PC-3 (cell line): ENCODE measurements at regions of chr6 and their contacts with region 1.

Region 1: GRCh38 chr6:143575440-143575839 is 63.9 kb upstream of the FUCA2 start:
- DNase-seq: peak; percentile 76
- ATAC-seq: peak; percentile 62
- H3K4me3 ChIP-seq: no peak overlapping the region
- H3K27ac ChIP-seq: no peak overlapping the region
- H3K4me1 ChIP-seq: peaks cover 9% of the 10 kb centered on the region
- H3K27me3 ChIP-seq: no peaks in the 10 kb centered on the region
- CTCF ChIP-seq: peak; percentile 87

Region 2: DNA sequence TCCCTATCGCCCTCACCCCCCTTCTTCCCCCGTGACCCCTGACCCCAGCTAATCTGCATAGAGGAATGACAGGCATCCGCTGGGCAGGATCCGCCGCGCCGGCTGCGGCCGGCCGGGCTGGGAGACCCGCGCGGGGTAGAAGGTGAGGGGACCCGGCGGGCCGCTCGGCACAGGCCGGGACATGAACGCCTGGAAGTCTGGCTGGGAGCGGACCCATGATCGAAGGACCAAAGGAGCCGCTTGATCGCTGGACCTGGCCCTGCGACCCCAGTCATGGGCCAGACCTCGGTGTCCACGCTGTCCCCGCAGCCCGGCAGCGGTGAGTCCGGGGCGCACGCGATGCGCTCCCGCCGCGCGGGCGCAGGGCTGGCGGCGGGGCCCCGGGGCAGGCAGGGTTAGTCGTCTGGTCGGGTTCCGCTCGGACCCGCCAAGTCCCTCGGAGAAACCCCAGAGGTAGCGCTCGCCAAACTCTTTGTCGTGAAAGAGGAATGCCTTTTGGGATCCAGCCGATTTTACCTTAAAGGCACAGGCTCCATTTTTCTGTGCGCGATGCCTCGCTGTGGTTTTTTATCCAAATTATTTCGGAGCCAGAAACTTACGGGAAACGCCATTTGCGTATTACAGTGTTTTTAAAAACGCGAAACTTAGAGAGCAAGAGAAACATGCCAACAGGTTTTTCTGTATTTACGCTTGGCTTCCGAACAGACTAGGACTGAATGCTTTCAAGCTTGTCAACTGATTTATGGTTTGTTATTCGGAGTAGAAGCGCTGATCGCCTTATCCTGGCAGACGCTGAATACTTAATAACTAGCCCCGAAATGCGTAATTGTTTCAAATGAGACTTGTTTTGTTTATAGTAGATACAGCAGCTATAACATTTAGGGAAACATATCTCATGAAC is 102.7 kb after region 1 on chr6 and contains the start of gene PHACTR2:
- CTCF ChIA-PET with region 1: no interaction called
- POLR2A ChIA-PET with region 1: no interaction called
- intact Hi-C with region 1: loop called (anchors 5 kb)
- DNase-seq: peak; percentile 57
- ATAC-seq: peak; percentile 67
- H3K4me3 ChIP-seq: peak within 1 kb of the TSS; percentile 93
- H3K27ac ChIP-seq: peak within 1 kb of the TSS; percentile 35
- H3K4me1 ChIP-seq: peaks cover 60% of the 10 kb centered on the region
- H3K27me3 ChIP-seq: no peaks in the 10 kb centered on the region
- CTCF ChIP-seq: no peak
- total RNA-seq, gene PHACTR2: 19.4 and 25.1 TPM in 2 replicates

Region 3: GRCh38 chr6:143842902-143843676 is 267.6 kb after region 1 on chr6 and contains the start of gene LTV1:
- CTCF ChIA-PET with region 1: interaction called, 11 read pairs
- POLR2A ChIA-PET with region 1: no interaction called
- intact Hi-C with region 1: loop called (anchors 5 kb)
- DNase-seq: peak; percentile 92
- ATAC-seq: peak; percentile 98
- H3K4me3 ChIP-seq: peak within 1 kb of the TSS; percentile 85
- H3K27ac ChIP-seq: peak within 1 kb of the TSS; percentile 54
- H3K4me1 ChIP-seq: peaks cover 9% of the 10 kb centered on the region; the same call in 1 of the 2 replicates
- H3K27me3 ChIP-seq: no peaks in the 10 kb centered on the region
- CTCF ChIP-seq: no peak
- total RNA-seq, gene LTV1: 20.7 and 25.1 TPM in 2 replicates

Region 4: GRCh38 chr6:143940011-143940597 is 364.7 kb after region 1 on chr6:
- CTCF ChIA-PET with region 1: interaction called, 8 read pairs
- POLR2A ChIA-PET with region 1: no interaction called
- intact Hi-C with region 1: loop called (anchors 1 kb)
- DNase-seq: peak; percentile 66
- ATAC-seq: peak; percentile 70
- H3K4me3 ChIP-seq: no peak overlapping the region
- H3K27ac ChIP-seq: no peak overlapping the region
- H3K4me1 ChIP-seq: no peaks in the 10 kb centered on the region
- H3K27me3 ChIP-seq: no peaks in the 10 kb centered on the region
- CTCF ChIP-seq: peak; percentile 89

Region 5: DNA sequence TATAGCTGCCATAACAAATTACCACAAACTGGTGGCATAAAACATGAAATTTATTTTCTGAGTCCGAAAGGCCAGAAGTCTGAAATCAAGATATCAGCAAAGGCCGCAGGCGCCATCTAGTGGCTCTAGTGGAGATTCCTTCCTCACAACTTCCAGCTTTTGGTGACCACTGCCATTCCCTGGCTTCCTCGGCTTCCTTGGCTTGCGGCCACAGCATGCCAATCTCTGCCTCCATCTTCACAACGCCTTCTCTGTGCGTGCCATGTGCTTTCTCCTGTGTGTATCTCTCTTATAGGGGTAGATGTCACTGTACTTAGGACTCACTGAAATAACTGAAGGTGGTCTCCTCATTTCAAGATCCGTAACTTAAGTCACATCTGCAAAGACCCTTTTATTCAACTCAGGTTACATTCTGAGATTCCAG is 438.1 kb after region 1 on chr6:
- CTCF ChIA-PET with region 1: interaction called, 9 read pairs
- POLR2A ChIA-PET with region 1: no interaction called
- intact Hi-C with region 1: loop called (anchors 1 kb)
- DNase-seq: peak; percentile 90
- ATAC-seq: peak; percentile 59
- H3K4me3 ChIP-seq: no peak overlapping the region
- H3K27ac ChIP-seq: no peak overlapping the region
- H3K4me1 ChIP-seq: 0 out of 2 replicates have a peak, but pooled peaks cover 10% of the 10 kb centered on the region
- H3K27me3 ChIP-seq: no peaks in the 10 kb centered on the region
- CTCF ChIP-seq: peak; percentile 83